Spleen (tissue), 13 donors: ENCODE measurements at regions of chr10 and their contacts with region 1.

Region 1: DNA sequence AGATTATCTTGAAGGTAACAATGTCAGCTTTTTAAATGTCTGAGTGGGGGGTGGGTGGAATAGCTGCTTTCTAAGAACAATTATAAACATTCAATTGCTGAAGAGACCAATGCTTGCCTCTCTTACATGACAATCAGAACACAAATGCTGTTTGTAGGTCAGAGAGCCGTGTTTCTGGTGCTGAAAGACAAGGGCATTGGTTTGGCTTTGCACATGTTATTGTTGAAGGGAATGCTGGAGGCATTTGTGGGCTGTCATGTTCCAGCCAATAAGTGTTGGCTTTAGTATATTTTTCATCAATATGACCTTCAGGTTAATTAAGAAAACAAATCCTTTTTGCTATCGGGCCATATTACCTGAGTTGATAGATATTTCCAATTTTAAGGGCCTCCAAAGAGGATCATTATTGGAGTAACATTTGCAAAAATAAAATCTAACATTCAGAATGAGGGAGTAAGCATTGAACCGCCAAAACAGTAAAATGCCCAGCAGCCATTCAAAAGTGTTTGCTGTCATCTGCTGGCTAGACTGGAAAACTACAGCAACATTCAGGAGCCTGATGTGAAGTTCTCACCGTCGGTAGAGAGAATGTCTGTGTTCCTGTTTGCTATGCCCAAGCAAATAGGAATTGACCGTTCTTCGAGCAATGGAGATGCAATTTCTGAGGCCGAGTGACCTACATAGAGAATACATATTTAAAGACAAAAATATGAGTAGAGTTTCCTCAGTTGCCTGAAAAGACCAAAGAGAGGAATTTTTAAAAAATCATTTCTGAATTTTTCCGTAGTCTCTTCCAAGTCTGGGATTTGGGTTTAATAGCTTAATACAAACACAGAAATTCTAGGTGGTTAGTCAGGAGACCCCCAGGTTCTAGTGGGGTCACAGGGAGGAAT is 118.9 kb downstream of the APBB1IP start:
- DNase-seq: no peak
- H3K4me3 ChIP-seq: no peak overlapping the region
- H3K27ac ChIP-seq: peak overlapping the region in 7 of 8 donors; percentile 53 to 91 (median 87)
- H3K4me1 ChIP-seq: peaks cover 0 to 53% (median 11%) of the 10 kb centered on the region in 6 donors
- H3K27me3 ChIP-seq: no peaks in the 10 kb centered on the region
- CTCF ChIP-seq: peak; percentile 46 to 82 (median 69)
- POLR2A ChIP-seq: no peak

Region 2: GRCh38 chr10:25875556-25876165 is 681.3 kb before region 1 on chr10:
- intact Hi-C with region 1: loop called (anchors 5 kb)
- DNase-seq: peak; percentile 82
- H3K4me3 ChIP-seq: no peak overlapping the region
- H3K27ac ChIP-seq: no peak overlapping the region
- H3K4me1 ChIP-seq: no peaks in the 10 kb centered on the region
- H3K27me3 ChIP-seq: peaks cover 0 to 4% (median 0%) of the 10 kb centered on the region in 7 donors
- CTCF ChIP-seq: peak in 10 of 11 experiments; percentile 38 to 87 (median 78)
- POLR2A ChIP-seq: no peak

Region 3: DNA sequence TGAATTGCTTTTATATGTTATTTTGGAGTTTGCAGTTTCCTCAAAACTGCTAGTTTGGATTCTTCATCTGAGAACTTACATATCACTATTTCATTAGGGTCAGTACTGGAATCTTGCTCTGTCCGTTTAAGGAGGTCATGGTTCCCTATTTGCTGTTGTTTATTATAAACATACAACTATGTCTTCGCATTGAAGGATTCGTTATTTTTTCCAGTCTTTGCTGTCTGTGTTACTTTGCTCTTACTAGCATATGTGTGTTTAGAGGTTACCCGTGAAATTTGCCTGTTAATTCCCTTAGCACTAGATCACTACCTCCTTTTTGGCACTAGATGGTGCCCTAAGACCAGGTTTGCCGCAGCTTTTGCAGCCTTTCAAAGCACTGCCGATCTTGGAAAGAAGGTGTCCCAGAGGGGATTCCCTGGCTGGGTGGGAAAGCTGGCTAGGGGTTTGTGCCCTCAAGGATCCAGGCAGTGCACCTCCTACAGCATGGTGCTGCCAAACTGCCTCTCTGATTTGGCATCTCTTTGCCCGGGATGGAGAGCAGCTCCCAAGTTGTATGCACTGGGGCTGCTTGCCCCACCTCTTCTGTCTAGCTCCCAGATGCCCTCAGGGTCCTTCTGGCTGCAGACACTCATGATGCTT is 221.9 kb before region 1 on chr10:
- intact Hi-C with region 1: loop called (anchors 5 kb)
- DNase-seq: peak; percentile 83
- H3K4me3 ChIP-seq: peak overlapping the region in 7 of 8 donors; percentile 15 to 64 (median 37)
- H3K27ac ChIP-seq: peak overlapping the region in 4 of 8 donors; percentile 24 to 82 (median 60)
- H3K4me1 ChIP-seq: peaks cover 0 to 21% (median 9%) of the 10 kb centered on the region in 6 donors
- H3K27me3 ChIP-seq: no peaks in the 10 kb centered on the region
- CTCF ChIP-seq: peak; percentile 48 to 93 (median 81)
- POLR2A ChIP-seq: no peak

Region 4: DNA sequence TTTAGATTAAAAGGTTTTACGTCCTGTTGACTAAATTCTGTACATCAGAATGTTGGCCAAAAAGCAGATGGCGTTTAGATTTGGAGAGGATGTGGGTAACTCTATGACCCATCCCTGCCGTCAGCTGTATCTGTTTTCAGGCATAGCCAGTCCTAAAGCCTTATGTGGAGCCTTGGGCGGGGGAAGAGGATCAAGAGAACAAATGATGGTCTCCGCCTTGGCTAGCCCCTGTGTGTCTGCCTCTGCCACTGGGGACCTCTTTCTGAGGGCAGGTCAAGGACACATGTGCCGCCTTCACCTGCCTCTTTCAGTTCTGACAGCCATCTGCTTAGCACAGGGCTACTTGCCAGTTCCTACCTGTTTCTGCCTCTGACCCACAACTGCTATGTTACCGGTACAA is 164.6 kb after region 1 on chr10:
- intact Hi-C with region 1: no loop called
- DNase-seq: peak; percentile 71
- H3K4me3 ChIP-seq: no peak overlapping the region
- H3K27ac ChIP-seq: peak overlapping the region in 5 of 8 donors; percentile 11 to 75 (median 48)
- H3K4me1 ChIP-seq: peaks cover 0 to 7% (median 6%) of the 10 kb centered on the region in 6 donors
- H3K27me3 ChIP-seq: no peaks in the 10 kb centered on the region
- CTCF ChIP-seq: no peak
- POLR2A ChIP-seq: no peak

Region 5: DNA sequence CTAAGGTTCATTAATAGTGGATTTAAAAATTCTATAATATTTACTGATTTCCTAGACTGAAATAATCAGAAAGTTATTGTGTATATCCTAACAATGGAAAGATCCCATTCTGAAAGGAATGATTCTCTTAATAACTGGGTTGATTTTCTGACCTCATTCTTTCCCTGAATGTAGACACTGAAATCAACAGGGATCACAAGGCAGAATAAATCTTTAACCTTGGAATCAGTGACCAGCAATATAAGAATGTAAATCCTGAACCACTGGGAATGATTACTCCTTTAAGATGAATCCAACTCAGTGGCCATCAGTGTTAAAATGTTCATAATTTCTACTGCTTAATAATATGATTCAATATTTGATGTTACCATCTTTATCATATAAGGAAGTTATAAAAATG is 495.7 kb after region 1 on chr10:
- intact Hi-C with region 1: no loop called
- DNase-seq: no peak
- H3K4me3 ChIP-seq: no peak overlapping the region
- H3K27ac ChIP-seq: no peak overlapping the region
- H3K4me1 ChIP-seq: no peaks in the 10 kb centered on the region
- H3K27me3 ChIP-seq: no peaks in the 10 kb centered on the region
- CTCF ChIP-seq: no peak
- POLR2A ChIP-seq: no peak